ENCODE measurements at regions of chr6 and their contacts with region 1.

Region 1: DNA sequence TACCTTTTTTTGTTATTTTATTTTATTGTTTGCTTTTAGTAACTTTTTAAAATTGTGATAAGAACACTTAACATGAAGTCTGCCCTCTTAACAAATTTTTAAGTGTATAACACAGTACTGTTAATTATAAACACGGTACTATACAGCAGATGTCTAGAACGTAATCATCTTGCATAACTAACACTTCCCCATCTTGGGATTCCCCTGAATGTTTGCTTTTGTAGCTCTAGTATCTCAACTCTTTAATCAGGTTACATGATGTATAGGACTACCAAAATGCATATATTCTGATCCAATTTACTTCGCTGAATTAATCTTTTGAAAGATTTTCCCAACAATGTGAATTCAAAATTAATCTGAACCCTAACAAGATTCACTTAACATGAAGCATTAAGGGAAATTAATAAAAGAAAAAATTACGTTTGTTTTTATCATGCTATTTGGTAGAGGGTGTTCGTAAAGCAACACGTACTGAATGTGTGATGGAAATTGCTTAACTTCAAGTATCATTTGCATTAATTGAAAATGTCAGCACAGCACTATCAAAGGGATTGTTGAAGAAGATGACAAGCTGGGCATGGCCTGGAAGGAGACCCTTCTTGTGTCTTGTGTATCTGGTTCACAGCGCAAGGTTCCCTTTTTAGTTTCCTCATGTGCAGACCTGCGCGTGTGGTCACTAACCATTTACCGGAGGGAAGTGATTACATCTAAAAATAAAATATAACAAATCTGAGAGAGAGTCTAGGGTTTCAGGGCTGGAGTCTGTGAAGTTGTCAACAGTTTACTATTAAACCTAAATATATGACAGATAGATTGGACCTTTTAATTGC is 15.2 kb downstream of the COL19A1 start:
- DNase-seq: no peak
- ATAC-seq: peak; percentile 87
- H3K4me3 Mint-ChIP-seq: peak overlapping the region; percentile 79
- H3K27ac Mint-ChIP-seq: peak overlapping the region; percentile 99
- H3K4me1 Mint-ChIP-seq: peaks cover 77% of the 10 kb centered on the region
- H3K27me3 Mint-ChIP-seq: no peaks in the 10 kb centered on the region
- CTCF ChIP-seq: no peak

Region 2: GRCh38 chr6:69813508-69813907 is 68.0 kb before region 1 on chr6:
- CTCF ChIA-PET with region 1: interaction called, 4 read pairs
- POLR2A ChIA-PET with region 1: interaction called, 8 read pairs
- intact Hi-C with region 1: loop called (anchors 2 kb)
- DNase-seq: no peak
- ATAC-seq: peak; percentile 56
- H3K4me3 Mint-ChIP-seq: peak overlapping the region; percentile 56
- H3K27ac Mint-ChIP-seq: peak overlapping the region; percentile 97
- H3K4me1 Mint-ChIP-seq: peaks cover 79% of the 10 kb centered on the region
- H3K27me3 Mint-ChIP-seq: no peaks in the 10 kb centered on the region
- CTCF ChIP-seq: no peak

Region 3: GRCh38 chr6:69917834-69918233 is 36.3 kb after region 1 on chr6:
- CTCF ChIA-PET with region 1: no interaction called
- POLR2A ChIA-PET with region 1: interaction called, 13 read pairs
- intact Hi-C with region 1: loop called (anchors 5 kb)
- DNase-seq: no peak
- ATAC-seq: peak; percentile 84
- H3K4me3 Mint-ChIP-seq: peak overlapping the region; percentile 36
- H3K27ac Mint-ChIP-seq: peak overlapping the region; percentile 54
- H3K4me1 Mint-ChIP-seq: peaks cover 48% of the 10 kb centered on the region
- H3K27me3 Mint-ChIP-seq: no peaks in the 10 kb centered on the region
- CTCF ChIP-seq: no peak

Region 4: DNA sequence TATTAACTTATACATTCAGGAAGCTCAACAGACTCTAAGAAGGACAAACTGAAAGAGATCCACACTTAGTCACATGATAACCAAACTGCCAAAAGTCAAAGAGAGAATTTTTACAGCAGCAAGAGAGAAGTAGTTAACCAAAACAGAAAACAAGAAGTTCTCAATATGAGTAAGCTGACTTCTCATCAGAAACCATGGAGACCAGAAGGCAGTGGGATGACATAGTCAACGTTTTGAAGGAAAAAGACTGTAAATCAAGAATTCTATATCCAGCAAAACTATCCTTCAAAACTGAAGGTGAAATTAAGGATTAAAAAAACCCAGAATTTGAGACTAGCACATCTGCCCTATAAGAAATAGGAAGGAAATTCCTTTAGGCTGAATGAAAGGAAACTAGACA is 45.2 kb after region 1 on chr6:
- CTCF ChIA-PET with region 1: no interaction called
- POLR2A ChIA-PET with region 1: interaction called, 13 read pairs
- intact Hi-C with region 1: loop called (anchors 2 kb)
- DNase-seq: no peak
- ATAC-seq: no peak
- H3K4me3 Mint-ChIP-seq: no peak overlapping the region
- H3K27ac Mint-ChIP-seq: no peak overlapping the region
- H3K4me1 Mint-ChIP-seq: peaks cover 4% of the 10 kb centered on the region
- H3K27me3 Mint-ChIP-seq: no peaks in the 10 kb centered on the region
- CTCF ChIP-seq: no peak